Activated CD4-positive, alpha-beta memory T cell treated with anti-CD3 and anti-CD28 coated beads for 36 hours (primary cell): ENCODE measurements at regions of chr17 and their contacts with region 1.

Region 1: GRCh38 chr17:58631523-58632323 is 60.1 kb downstream of the TEX14 start:
- DNase-seq: peak; percentile 98
- H3K4me3 Mint-ChIP-seq: no peak overlapping the region
- H3K27ac Mint-ChIP-seq: no peak overlapping the region
- H3K4me1 Mint-ChIP-seq: peaks cover 3% of the 10 kb centered on the region
- H3K27me3 Mint-ChIP-seq: no peaks in the 10 kb centered on the region

Region 2: DNA sequence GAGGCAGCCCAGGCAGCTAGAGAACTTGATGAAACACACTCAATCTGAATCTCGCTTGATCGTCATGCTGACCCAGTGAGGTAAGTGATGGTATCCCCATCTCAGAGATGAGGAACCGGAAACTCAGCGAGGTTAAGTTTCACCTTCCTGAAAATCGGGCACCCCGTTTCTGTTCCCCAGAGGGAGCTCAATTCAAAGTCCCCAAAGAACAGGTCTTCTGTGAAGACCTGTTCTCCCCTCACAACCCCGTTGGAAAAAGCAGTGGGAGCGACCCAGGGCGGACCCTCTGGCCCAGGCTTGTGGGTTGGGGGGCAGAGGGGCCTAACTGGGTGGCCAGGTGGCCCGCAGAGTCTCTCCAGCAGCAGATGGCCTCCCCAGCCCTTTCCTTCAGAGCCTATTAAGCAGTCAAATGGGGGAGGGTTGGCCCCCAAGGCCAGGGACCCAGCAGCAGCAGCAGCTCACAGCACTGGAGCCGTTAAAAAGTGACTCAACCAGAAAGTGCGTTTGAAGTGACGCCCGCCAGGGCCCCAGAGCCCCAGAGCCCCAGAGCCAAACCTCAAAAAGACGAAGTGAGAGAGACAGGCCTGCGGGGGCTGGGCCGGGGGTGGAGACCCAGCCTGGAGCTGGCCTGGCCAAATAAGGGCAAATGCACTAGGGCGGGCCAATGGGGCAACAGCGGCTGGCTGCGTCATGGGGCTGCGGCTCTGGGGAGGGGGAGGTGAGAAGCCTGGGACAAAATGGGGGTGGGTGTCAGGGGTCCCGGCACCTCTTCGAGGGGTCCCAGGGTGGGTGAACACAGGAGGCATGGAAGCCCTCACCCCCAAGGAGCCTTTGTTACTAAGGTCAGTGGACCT is 293.9 kb before region 1 on chr17:
- CTCF ChIA-PET with region 1: no interaction called
- POLR2A ChIA-PET with region 1: interaction called, 21 read pairs
- intact Hi-C with region 1: loop called (anchors 5 kb)
- DNase-seq: peak; percentile 98
- H3K4me3 Mint-ChIP-seq: peak overlapping the region; percentile 92
- H3K27ac Mint-ChIP-seq: peak overlapping the region; percentile 98
- H3K4me1 Mint-ChIP-seq: peaks cover 22% of the 10 kb centered on the region
- H3K27me3 Mint-ChIP-seq: no peaks in the 10 kb centered on the region

Region 3: DNA sequence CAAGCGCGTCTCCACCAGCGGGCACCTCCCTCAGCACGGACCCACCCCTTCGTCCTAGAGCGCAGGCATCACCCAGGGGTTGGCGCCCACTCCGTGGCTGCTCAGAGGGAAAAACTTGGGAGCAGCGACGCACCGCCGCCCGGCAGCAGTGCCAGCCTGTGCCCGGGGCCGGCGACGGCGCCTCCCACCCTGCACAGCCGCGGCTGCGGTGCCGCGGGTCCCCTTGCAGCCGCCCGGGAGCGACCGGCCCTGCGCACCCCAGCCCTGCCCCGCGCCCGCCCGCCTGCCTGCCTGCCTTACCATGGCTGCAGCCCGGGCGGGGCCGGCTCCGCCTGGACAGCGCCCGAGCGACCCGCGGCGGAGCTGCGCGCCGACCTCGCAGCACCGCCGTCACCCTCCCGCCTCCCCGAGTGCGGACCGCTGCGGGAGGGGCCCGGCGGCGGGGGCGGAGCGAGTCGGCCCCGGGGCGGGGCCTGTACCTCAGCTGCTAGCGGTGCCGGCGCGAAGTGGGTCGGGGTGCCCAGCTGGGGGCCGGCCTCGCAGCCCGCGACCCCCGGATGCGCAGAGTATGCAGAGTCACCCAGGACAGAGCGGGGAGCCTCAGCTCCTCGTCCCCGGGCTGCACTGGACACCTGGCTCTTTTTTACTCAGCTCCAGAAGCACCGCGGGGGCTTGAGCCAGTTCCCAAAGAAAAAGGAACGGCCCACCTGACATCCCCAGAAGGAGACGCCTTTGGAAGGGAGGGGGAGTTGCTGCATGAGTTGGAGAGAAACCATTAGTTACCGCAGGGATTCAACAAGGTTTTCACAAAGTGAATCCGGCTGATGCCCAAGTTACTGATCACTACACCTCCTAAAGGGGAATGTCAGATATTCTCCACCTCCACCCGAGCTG is 99.8 kb before region 1 on chr17:
- CTCF ChIA-PET with region 1: no interaction called
- POLR2A ChIA-PET with region 1: interaction called, 22 read pairs
- intact Hi-C with region 1: no loop called
- DNase-seq: peak; percentile 67
- H3K4me3 Mint-ChIP-seq: peak overlapping the region; percentile 40
- H3K27ac Mint-ChIP-seq: no peak overlapping the region
- H3K4me1 Mint-ChIP-seq: peaks cover 3% of the 10 kb centered on the region
- H3K27me3 Mint-ChIP-seq: peaks cover 11% of the 10 kb centered on the region

Region 4: DNA sequence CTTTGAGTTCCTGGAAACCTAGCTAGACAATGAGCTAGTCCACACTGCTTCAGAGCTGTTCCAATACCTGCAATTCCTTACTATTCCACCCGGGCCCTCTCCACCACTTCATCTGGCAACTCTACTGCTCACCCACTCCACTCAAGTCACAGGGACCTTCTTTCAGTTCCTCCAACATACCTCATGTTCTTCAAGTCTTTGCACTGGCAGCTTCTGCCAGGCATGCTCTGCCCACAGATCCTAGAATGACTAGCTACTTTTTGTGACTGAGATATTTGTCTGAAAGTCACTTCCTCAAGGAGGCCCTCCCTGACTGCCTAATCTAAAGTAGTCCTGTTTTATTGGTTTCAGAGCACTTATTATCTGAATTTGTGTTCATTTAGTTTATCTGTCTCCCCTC is 26.3 kb before region 1 on chr17:
- CTCF ChIA-PET with region 1: no interaction called
- POLR2A ChIA-PET with region 1: interaction called, 30 read pairs
- intact Hi-C with region 1: no loop called
- DNase-seq: peak; percentile 45
- H3K4me3 Mint-ChIP-seq: no peak overlapping the region
- H3K27ac Mint-ChIP-seq: peak overlapping the region; percentile 30
- H3K4me1 Mint-ChIP-seq: peaks cover 8% of the 10 kb centered on the region
- H3K27me3 Mint-ChIP-seq: no peaks in the 10 kb centered on the region

Region 5: GRCh38 chr17:58648236-58648806 is 16.6 kb after region 1 on chr17:
- CTCF ChIA-PET with region 1: interaction called, 3 read pairs
- POLR2A ChIA-PET with region 1: interaction called, 243 read pairs
- intact Hi-C with region 1: no loop called
- DNase-seq: no peak
- H3K4me3 Mint-ChIP-seq: no peak overlapping the region
- H3K27ac Mint-ChIP-seq: no peak overlapping the region
- H3K4me1 Mint-ChIP-seq: no peaks in the 10 kb centered on the region
- H3K27me3 Mint-ChIP-seq: no peaks in the 10 kb centered on the region

Region 6: DNA sequence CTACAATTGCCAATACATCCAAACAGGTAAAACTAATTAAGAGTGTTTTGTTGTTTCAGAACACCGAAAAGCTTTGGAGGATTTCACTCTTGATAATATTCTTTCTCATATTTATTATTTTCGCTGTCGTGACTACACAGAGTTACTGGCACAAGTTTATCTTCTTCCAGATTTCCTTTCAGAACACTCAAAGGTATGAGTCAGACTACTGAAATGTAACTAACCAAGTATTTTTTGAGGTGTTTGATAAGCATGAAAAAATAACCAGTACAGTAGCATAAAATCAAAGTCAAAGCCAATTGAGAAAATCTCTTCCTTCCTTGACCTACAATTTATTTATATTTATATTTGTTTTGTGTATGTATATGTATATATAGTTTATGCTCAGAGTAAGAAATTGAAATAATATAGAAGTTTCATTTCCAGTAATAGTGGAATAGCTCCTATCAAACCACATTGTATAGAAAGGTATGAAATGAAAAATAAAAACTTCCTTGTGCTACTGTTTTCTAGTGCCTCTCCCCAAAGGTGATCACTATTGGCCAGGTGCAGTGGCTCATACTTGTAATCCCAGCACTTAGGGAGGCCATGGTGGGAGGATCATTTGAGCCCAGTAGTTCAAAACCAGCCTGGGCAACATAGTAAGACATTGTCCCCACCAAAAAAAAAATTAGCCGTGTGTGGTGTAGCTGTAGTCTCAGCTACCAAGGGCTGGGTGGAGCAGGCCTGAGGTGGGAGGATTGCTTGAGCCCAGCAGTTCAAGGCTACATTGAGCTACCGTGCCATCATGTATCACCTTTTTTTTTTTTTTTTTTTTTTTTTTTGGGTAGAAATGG is 71.6 kb after region 1 on chr17:
- CTCF ChIA-PET with region 1: interaction called, 5 read pairs
- POLR2A ChIA-PET with region 1: interaction called, 30 read pairs
- intact Hi-C with region 1: loop called (anchors 2 kb)
- DNase-seq: peak; percentile 36
- H3K4me3 Mint-ChIP-seq: no peak overlapping the region
- H3K27ac Mint-ChIP-seq: peak overlapping the region; percentile 78
- H3K4me1 Mint-ChIP-seq: peaks cover 30% of the 10 kb centered on the region
- H3K27me3 Mint-ChIP-seq: no peaks in the 10 kb centered on the region

Region 7: DNA sequence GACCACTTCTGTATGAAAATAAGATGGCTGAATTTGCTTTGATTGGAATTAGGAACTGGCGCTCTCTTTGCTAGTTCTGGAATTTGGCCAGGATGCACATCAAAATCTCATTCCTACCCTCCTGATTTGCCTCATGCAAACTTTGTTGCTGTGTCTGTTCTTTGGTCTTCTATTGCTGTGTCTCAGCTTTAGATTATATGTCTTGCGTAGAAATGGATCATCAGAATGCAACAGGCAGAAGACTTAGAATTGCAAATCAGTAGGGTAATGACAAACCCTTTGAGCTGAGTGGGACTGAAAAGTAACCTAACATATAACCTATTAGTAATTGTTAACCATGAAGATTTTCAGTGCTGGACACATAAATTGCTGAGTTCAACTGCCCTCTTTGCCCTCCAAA is 91.0 kb after region 1 on chr17:
- CTCF ChIA-PET with region 1: no interaction called
- POLR2A ChIA-PET with region 1: no interaction called
- intact Hi-C with region 1: no loop called
- DNase-seq: no peak
- H3K4me3 Mint-ChIP-seq: no peak overlapping the region
- H3K27ac Mint-ChIP-seq: no peak overlapping the region
- H3K4me1 Mint-ChIP-seq: no peaks in the 10 kb centered on the region
- H3K27me3 Mint-ChIP-seq: no peaks in the 10 kb centered on the region

Region 8: DNA sequence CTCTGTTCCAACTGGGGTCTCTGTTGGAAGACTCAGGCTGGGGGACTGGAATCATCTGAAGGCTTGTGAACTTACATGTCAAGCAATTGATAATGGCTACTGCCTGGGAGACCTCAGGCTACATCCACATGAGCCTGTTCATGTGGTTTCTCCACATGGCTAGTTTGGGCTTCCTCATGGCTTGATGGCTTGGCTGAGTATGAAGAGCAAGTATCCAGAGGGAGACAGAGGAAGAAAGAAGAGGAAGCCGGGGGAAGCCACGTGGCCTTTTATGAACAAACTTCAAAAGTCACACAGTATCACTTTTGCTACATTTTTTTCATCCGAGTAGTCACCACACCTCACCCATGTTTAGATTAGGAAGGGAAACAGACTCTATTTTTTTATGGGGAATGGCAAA is 316.1 kb after region 1 on chr17:
- CTCF ChIA-PET with region 1: no interaction called
- POLR2A ChIA-PET with region 1: no interaction called
- intact Hi-C with region 1: no loop called
- DNase-seq: no peak
- H3K4me3 Mint-ChIP-seq: no peak overlapping the region
- H3K27ac Mint-ChIP-seq: no peak overlapping the region
- H3K4me1 Mint-ChIP-seq: no peaks in the 10 kb centered on the region
- H3K27me3 Mint-ChIP-seq: peaks cover 13% of the 10 kb centered on the region